H1 (cell line): ENCODE measurements at regions of chr17 and their contacts with region 1.

Region 1: DNA sequence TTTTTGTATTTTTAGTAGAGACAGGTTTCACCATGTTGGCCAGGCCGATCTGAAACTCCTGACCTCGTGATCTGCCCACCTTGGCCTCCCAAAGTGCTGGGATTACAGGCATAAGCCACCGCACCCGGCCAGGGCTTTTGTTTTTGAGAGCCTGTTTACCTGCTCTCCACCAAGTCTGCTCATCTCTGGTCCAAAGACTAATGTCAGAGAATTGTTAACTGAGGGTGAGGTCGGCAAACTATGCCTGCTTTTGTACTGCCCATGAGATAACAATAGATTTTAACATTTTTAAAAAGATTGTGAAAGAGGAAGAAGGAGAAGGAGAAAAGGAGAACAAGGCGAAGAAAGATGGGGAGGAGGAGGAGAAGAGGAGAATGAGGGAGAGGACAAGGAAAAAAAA is 26.0 kb downstream of the TMEM238L start:
- DNase-seq: no peak
- H3K4me3 ChIP-seq: no peak overlapping the region
- H3K27ac ChIP-seq: no peak overlapping the region
- H3K4me1 ChIP-seq: no peaks in the 10 kb centered on the region
- H3K27me3 ChIP-seq: no peaks in the 10 kb centered on the region
- CTCF ChIP-seq: no peak
- EP300 ChIP-seq: no peak
- POLR2A ChIP-seq: no peak
- RAD21 ChIP-seq: no peak

Region 2: DNA sequence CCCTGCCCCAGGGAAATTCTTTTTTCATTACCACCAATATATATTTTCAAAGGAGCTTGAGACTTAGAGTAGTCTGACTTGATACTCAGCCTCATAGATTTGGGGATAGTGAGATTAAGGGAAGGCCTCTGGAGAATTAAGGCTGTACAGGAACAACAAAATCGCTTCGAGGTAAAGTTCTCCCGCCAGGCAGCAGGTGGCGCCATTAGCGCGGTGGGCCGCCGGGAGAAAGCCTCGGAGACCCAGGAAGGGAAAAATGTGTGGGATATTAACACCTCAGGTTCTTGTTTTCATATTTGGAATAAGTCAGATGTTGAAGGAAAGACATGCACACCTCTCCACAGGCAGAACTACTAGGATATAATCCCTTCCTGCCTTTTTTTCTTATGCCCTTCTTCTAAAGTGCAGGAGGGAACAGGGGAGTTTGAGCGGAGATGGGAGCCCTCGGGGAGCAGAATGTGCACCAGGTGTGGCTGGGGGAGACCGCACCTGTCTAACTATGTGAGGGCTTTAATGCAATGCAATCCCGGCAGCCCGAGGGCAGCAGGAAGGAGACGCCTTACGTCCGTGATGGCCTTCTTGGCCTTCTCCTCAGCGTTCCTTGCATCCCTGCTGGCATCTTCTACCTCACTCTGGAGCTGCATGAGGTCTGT is 146.7 kb before region 1 on chr17:
- CTCF ChIA-PET with region 1: no interaction called
- POLR2A ChIA-PET with region 1: no interaction called
- DNase-seq: peak in 1 of 2 experiments; percentile 85
- H3K4me3 ChIP-seq: no peak overlapping the region
- H3K27ac ChIP-seq: no peak overlapping the region
- H3K4me1 ChIP-seq: no peaks in the 10 kb centered on the region
- H3K27me3 ChIP-seq: no peaks in the 10 kb centered on the region
- CTCF ChIP-seq: peak; percentile 75 to 79 (median 78)
- EP300 ChIP-seq: no peak
- POLR2A ChIP-seq: no peak
- RAD21 ChIP-seq: peak; percentile 65 to 70

Region 3: GRCh38 chr17:10790491-10791401 is 12.9 kb after region 1 on chr17:
- CTCF ChIA-PET with region 1: interaction called, 22 read pairs
- POLR2A ChIA-PET with region 1: interaction called, 10 read pairs
- DNase-seq: no peak
- H3K4me3 ChIP-seq: no peak overlapping the region
- H3K27ac ChIP-seq: no peak overlapping the region
- H3K4me1 ChIP-seq: peaks cover 4 to 13% (median 5%) of the 10 kb centered on the region in 4 experiments; a peak in 4 of 7 replicates
- H3K27me3 ChIP-seq: no peaks in the 10 kb centered on the region; a peak in 1 of 7 replicates
- CTCF ChIP-seq: no peak
- EP300 ChIP-seq: no peak
- POLR2A ChIP-seq: peak; percentile 63 to 90
- RAD21 ChIP-seq: no peak